Activated naive CD4-positive, alpha-beta T cell treated with anti-CD3 and anti-CD28 coated beads for 36 hours (primary cell): ENCODE measurements at regions of chr4 and their contacts with region 1.

Region 1: GRCh38 chr4:153497988-153498967 is 32.1 kb downstream of the TMEM131L start:
- DNase-seq: peak; percentile 33
- H3K4me3 Mint-ChIP-seq: peak overlapping the region; percentile 70
- H3K27ac Mint-ChIP-seq: peak overlapping the region; percentile 98
- H3K4me1 Mint-ChIP-seq: peaks cover 91% of the 10 kb centered on the region
- H3K27me3 Mint-ChIP-seq: no peaks in the 10 kb centered on the region

Region 2: GRCh38 chr4:152209772-152210493 is 1288.3 kb before region 1 on chr4:
- CTCF ChIA-PET with region 1: no interaction called
- intact Hi-C with region 1: no loop called
- DNase-seq: no peak
- H3K4me3 Mint-ChIP-seq: no peak overlapping the region
- H3K27ac Mint-ChIP-seq: no peak overlapping the region
- H3K4me1 Mint-ChIP-seq: no peaks in the 10 kb centered on the region
- H3K27me3 Mint-ChIP-seq: no peaks in the 10 kb centered on the region

Region 3: DNA sequence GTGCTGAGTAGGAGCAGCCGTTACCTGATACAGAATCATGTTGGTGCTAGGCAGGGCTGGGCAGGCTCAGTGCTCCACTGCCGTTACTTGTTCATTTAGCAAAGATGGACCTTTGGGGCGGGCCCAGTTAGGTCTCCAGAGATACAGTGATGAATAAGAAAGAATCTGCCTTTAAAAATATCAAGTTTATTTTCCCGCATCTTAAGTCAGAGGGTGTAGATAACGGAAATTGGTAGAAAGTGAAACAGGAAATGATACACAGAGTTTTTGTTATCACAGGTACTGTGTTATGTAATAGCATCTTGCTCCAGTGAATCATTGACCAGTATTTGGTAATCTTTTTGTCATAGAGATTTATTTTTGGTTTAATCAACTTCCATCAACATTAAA is 26.6 kb before region 1 on chr4:
- CTCF ChIA-PET with region 1: interaction called, 16 read pairs
- intact Hi-C with region 1: loop called (anchors 1 kb)
- DNase-seq: peak; percentile 85
- H3K4me3 Mint-ChIP-seq: peak overlapping the region; percentile 95
- H3K27ac Mint-ChIP-seq: peak overlapping the region; percentile 96
- H3K4me1 Mint-ChIP-seq: peaks cover 70% of the 10 kb centered on the region
- H3K27me3 Mint-ChIP-seq: no peaks in the 10 kb centered on the region

Region 4: DNA sequence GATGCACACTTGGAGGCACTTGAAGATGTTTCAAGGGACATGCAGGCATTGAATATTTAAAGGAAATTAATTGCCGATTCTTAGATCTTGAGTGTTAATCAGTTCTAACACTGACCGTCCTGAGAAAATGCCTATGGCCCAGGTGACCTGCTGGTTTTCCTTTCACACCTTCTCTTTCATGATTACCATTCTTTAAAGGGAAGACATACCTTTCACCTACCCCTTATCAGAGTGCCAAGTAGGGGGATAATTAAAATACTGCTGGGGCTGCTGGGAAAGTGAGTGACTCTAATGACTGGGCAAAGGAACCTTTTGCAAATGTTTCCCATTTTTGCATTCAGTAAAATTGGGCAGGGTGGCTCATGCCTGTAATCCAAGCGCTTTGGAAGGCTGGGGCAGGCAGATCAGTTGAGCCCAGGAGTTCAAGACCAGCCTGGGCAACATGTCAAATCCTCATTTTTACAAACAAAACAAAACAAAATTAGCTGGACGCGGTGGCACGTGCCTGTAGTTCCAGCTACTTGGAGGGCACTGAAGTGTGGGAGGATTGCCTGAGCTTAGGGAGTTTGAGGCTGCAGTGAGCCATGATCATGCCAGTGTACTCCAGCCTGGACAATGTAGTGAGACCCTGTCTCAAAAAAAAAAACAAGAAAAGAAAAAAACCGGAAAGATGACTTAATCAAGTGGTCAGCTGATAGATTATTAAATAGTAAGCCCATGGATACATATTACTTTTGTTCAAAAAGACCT is 12.1 kb after region 1 on chr4:
- CTCF ChIA-PET with region 1: interaction called, 3 read pairs
- intact Hi-C with region 1: loop called (anchors 1 kb)
- DNase-seq: no peak
- H3K4me3 Mint-ChIP-seq: no peak overlapping the region
- H3K27ac Mint-ChIP-seq: no peak overlapping the region
- H3K4me1 Mint-ChIP-seq: peaks cover 81% of the 10 kb centered on the region
- H3K27me3 Mint-ChIP-seq: no peaks in the 10 kb centered on the region

Region 5: DNA sequence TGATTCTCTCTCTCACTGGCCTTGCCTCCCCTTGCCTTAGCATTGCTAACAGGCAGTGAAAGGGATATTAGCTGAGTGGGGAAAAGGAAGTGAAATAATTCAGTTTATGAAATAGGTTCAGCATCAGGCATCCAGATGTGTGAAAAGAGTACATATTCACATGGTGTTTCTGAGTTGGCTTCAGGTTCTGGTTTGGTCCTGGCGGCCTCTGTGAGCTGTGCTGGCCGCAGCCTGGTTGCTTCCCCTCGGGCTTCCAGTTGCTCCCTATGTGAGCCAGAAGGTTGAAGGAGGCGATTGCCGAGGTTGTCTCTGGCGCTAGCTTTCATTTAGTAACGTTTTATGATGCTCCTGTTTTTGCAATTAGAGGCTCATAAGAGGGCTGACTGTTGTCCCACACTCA is 86.7 kb after region 1 on chr4:
- CTCF ChIA-PET with region 1: no interaction called
- intact Hi-C with region 1: no loop called
- DNase-seq: no peak
- H3K4me3 Mint-ChIP-seq: no peak overlapping the region
- H3K27ac Mint-ChIP-seq: peak overlapping the region; percentile 47
- H3K4me1 Mint-ChIP-seq: peaks cover 37% of the 10 kb centered on the region
- H3K27me3 Mint-ChIP-seq: no peaks in the 10 kb centered on the region

Region 6: DNA sequence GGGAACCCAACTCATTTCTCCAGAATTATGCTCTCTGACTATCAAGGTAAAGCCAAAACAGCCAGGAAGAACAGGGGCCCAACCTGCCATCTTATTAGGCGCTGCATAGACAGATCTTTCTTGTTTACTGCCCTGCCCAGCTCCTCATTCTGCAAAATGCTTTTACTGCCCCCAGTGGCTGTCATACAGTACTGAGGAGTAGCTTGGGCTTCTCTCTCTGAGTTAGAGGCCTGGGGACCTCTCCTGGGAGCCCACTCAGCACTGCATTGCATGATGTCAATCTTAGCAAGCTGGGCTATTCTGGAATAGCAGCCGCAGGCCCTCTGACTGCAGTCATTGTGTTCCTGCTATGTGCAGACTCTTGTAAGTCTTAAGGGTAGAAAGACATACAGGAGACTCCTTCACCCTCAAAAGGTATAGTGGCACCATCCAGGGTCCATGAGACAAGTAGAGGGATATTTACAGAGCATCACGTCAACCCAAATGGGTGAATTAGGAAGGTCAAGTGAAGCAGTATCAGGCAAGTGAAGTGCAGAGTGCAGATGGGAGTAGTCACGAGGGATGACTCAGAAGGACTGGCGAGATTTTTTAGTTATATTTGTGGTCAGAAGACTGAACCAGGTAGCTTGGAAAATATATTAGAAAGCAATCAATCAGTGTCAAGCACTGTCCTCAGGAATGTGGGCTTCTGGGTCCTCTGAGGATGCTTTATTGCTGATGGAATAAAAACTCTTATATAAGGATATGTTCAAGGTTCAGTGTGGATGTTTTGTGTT is 584.7 kb after region 1 on chr4:
- CTCF ChIA-PET with region 1: no interaction called
- intact Hi-C with region 1: no loop called
- DNase-seq: peak; percentile 22
- H3K4me3 Mint-ChIP-seq: no peak overlapping the region
- H3K27ac Mint-ChIP-seq: no peak overlapping the region
- H3K4me1 Mint-ChIP-seq: no peaks in the 10 kb centered on the region
- H3K27me3 Mint-ChIP-seq: peaks cover 2% of the 10 kb centered on the region